ENCODE measurements at regions of chr17 and their contacts with region 1.

Region 1: GRCh38 chr17:15502369-15503112 is 35.1 kb upstream of the CDRT4 start:
- DNase-seq: peak; percentile 94
- ATAC-seq: peak; percentile 94
- H3K4me3 Mint-ChIP-seq: peak overlapping the region; percentile 63
- H3K27ac Mint-ChIP-seq: peak overlapping the region; percentile 58; the same call in 1 of the 2 replicates
- H3K4me1 Mint-ChIP-seq: peaks cover 20% of the 10 kb centered on the region
- H3K27me3 Mint-ChIP-seq: no peaks in the 10 kb centered on the region
- CTCF ChIP-seq: peak; percentile 72; the same call in 1 of the 2 replicates

Region 2: DNA sequence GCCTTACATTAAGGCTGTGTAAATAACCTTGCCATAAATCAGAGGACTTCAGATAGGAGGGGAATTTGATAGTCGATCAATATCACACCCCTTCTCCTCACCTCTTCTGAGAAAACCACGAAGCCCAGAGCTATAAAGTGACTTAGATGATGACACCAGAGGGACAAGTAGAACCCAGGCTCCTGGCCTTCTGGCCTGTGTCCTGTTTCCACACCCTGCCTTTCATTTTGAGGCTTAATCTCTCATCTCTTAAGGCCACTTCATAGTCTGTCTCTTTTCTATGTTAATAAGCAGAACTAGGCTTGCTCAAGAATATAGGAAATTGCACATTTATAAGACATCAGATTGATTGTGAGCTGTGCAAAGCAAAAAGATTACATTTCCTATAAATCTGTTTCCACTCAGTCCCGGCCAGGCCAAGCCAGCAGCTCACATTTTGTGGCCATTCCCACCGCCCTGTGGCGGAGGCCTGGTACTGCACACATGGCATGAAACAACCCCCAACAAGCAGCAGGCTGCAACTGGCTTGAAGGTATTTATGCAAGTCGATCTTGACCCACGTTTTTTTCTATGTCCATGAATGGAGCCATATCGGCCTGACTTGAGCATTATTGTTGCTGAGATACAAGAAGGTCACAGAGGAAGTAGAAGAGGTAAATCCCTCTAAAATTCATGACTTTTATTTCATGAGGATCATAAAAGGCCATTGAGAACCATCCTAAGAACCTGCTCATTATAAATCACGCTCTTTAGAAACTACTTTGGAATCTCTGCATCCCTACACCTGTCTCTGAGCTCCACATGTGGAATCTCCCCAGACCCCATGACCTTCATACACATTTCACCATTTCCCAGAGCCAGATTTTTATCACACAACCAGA is 331.1 kb before region 1 on chr17:
- CTCF ChIA-PET with region 1: no interaction called
- POLR2A ChIA-PET with region 1: no interaction called
- DNase-seq: peak; percentile 83
- ATAC-seq: peak; percentile 99
- H3K4me3 Mint-ChIP-seq: no peak overlapping the region
- H3K27ac Mint-ChIP-seq: no peak overlapping the region
- H3K4me1 Mint-ChIP-seq: peaks cover 29% of the 10 kb centered on the region
- H3K27me3 Mint-ChIP-seq: peaks cover 5% of the 10 kb centered on the region
- CTCF ChIP-seq: peak; percentile 82

Region 3: DNA sequence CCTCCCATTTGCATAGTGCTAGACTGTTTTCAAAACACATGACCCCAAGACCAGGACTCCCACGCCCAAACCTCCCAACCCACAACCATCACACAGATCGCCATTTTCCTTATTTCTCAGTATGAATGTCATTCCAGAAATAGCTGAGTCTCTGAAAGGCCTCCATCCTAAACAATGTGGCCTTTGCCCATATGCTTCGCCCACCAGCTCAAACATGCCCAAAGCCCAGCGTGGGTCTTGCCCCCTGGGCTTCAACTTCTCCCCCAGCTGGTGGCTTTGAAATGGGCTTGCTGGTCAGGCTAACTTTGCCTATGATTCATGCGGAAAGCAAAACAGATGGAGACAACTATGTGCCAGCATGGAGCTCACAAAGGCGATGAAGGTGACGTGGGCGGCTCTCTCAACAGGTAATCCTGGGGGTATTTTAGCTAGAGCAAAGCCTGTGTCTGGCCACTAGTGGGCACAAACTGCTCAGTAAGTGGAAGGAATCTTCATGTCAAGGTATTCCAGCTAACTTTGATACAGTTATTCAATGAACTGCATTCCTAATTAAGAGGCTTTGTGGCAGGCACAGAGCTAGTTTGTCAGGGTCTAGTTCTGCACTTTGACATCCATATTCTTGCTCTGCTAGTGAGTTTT is 254.5 kb before region 1 on chr17:
- CTCF ChIA-PET with region 1: interaction called, 62 read pairs
- POLR2A ChIA-PET with region 1: interaction called, 5 read pairs
- DNase-seq: peak; percentile 24
- ATAC-seq: peak; percentile 71
- H3K4me3 Mint-ChIP-seq: no peak overlapping the region
- H3K27ac Mint-ChIP-seq: no peak overlapping the region
- H3K4me1 Mint-ChIP-seq: peaks cover 14% of the 10 kb centered on the region
- H3K27me3 Mint-ChIP-seq: no peaks in the 10 kb centered on the region
- CTCF ChIP-seq: no peak

Region 4: GRCh38 chr17:15398736-15399331 is 103.7 kb before region 1 on chr17:
- CTCF ChIA-PET with region 1: no interaction called
- POLR2A ChIA-PET with region 1: no interaction called
- DNase-seq: no peak
- ATAC-seq: no peak
- H3K4me3 Mint-ChIP-seq: no peak overlapping the region
- H3K27ac Mint-ChIP-seq: no peak overlapping the region
- H3K4me1 Mint-ChIP-seq: no peaks in the 10 kb centered on the region
- H3K27me3 Mint-ChIP-seq: no peaks in the 10 kb centered on the region
- CTCF ChIP-seq: no peak

Region 5: DNA sequence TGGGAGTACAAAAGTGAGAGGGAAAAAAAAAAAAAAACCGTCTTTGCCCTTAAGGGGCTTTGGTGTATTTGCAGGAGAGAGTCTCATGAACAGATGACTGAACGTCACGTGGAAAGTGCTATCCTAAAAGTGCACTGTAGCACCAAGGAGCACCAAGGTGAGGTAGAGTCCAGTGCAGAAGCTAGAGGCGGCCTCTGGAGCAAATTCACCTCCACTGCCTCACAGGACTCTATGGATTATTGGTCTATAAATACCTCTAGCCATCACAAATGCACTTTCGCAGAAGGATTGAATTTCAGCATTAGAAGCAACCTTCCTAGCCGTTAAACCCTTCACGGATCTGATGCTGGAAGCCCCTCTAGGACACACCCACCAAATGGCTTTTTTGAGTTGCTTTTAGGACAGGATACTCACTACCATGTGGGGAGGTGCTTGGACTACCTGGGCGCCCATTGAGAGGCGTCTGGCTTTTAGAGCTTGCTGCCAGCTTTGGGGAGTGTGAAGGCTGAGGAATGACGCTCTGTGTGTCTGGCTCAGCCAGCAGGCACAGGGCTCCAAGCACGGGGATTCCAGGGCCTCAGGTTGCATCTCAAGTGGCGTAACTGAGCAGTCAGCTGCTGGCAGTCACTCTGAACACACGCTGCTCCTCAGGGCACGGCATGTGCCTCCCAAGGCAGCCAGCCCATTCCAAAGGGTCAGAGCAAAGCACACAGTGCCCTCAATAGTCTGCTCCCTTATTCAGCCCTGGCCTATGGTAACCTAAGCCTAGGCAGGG is 87.8 kb before region 1 on chr17:
- CTCF ChIA-PET with region 1: interaction called, 14 read pairs
- POLR2A ChIA-PET with region 1: no interaction called
- DNase-seq: no peak
- ATAC-seq: no peak
- H3K4me3 Mint-ChIP-seq: no peak overlapping the region
- H3K27ac Mint-ChIP-seq: no peak overlapping the region
- H3K4me1 Mint-ChIP-seq: peaks cover 17% of the 10 kb centered on the region
- H3K27me3 Mint-ChIP-seq: peaks cover 3% of the 10 kb centered on the region; the same call in 1 of the 2 replicates
- CTCF ChIP-seq: no peak

Region 6: DNA sequence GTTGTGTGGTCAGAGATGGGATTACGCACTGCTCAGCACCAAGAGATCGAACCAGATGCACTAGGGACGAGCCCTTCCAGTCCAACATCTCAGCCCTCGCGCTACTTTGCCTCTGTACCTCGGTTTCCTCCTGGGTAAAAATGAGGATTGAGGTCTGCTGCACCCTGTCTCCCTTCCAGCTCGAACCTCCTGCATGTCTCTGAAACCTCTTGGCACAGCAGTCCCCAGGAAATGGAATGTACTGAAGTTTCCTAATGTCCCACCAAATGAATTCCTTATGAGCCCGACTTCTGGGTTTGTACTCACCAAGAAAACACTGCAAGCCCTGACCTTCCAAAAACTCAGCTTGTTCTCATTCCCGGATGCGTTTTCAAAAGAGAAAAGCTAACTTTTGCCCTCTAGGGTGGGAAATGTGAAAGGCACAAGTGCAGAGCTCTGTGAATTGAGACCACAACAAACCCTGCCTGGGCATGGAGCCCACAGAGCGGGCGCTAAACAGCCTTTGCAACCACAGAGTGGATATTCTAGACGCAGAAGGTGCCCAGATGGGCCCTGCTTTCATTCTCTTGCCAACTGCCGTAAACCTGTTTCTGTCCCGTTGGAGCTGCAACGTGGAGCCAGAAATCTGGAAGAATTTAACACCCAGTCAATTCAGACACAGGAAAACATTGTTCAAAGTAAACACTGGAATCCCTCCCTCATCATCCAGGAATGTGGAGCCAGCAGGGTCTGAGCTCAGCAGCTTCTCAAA is 45.4 kb before region 1 on chr17:
- CTCF ChIA-PET with region 1: interaction called, 19 read pairs
- POLR2A ChIA-PET with region 1: interaction called, 5 read pairs
- DNase-seq: no peak
- ATAC-seq: no peak
- H3K4me3 Mint-ChIP-seq: no peak overlapping the region
- H3K27ac Mint-ChIP-seq: no peak overlapping the region
- H3K4me1 Mint-ChIP-seq: no peaks in the 10 kb centered on the region
- H3K27me3 Mint-ChIP-seq: no peaks in the 10 kb centered on the region
- CTCF ChIP-seq: no peak

Region 7: DNA sequence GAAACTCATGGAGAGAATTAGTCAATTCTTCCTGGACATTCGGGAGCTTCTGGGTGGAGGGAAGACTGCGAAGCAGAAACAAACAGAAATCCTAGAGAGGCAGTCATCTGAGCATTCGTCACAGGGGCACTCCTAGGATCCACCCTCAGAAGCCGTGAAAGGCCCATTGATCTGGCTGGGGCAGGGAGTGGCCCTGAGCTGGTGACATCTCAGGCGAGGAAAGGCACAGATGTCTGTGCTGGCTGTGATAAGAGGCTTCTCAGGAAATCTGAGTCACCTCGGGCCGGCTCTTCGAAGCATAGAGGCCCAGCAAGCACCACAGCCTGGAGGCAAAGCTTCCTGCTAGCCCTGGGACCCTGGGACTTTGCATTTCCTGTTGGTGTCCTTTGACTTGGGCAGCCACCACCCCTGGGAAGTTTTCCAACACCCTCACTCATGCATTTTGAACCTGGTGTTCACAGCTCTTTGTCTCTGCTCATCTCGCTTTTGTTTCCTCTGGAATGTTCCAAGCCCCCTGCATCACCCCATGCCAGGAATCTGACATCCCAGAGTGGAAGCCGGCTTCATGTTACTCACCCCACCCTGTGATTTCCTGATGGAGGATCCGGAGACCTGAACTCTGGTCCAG is 11.8 kb before region 1 on chr17:
- CTCF ChIA-PET with region 1: interaction called, 61 read pairs
- POLR2A ChIA-PET with region 1: interaction called, 3 read pairs
- DNase-seq: peak; percentile 56
- ATAC-seq: peak; percentile 90
- H3K4me3 Mint-ChIP-seq: no peak overlapping the region; the same call in 1 of the 2 replicates
- H3K27ac Mint-ChIP-seq: peak overlapping the region; percentile 96
- H3K4me1 Mint-ChIP-seq: peaks cover 43% of the 10 kb centered on the region
- H3K27me3 Mint-ChIP-seq: no peaks in the 10 kb centered on the region
- CTCF ChIP-seq: no peak